HCT116 (cell line): ENCODE measurements at regions of chr17 and their contacts with region 1.

Region 1: GRCh38 chr17:63919311-63919723 is 678 bp upstream of the GH1 start:
- DNase-seq: peak; percentile 59
- ATAC-seq: peak; percentile 98
- H3K4me3 ChIP-seq: no peak overlapping the region
- H3K27ac ChIP-seq: no peak overlapping the region
- H3K4me1 ChIP-seq: no peaks in the 10 kb centered on the region
- H3K27me3 ChIP-seq: no peaks in the 10 kb centered on the region
- CTCF ChIP-seq: peak; percentile 96 to 98 (median 98)
- POLR2A ChIP-seq: no peak
- RAD21 ChIP-seq: peak; percentile 97

Region 2: GRCh38 chr17:63984651-63985386 is 65.5 kb after region 1 on chr17:
- CTCF ChIA-PET with region 1: interaction called, 77 read pairs
- POLR2A ChIA-PET with region 1: no interaction called
- RAD21 ChIA-PET with region 1: no interaction called
- intact Hi-C with region 1: loop called (anchors 1 kb)
- DNase-seq: peak; percentile 64
- ATAC-seq: peak; percentile 65
- H3K4me3 ChIP-seq: no peak overlapping the region
- H3K27ac ChIP-seq: no peak overlapping the region
- H3K4me1 ChIP-seq: peaks cover 5 to 16% of the 10 kb centered on the region in 2 experiments
- H3K27me3 ChIP-seq: no peaks in the 10 kb centered on the region
- CTCF ChIP-seq: no peak
- POLR2A ChIP-seq: no peak
- RAD21 ChIP-seq: no peak

Region 3: DNA sequence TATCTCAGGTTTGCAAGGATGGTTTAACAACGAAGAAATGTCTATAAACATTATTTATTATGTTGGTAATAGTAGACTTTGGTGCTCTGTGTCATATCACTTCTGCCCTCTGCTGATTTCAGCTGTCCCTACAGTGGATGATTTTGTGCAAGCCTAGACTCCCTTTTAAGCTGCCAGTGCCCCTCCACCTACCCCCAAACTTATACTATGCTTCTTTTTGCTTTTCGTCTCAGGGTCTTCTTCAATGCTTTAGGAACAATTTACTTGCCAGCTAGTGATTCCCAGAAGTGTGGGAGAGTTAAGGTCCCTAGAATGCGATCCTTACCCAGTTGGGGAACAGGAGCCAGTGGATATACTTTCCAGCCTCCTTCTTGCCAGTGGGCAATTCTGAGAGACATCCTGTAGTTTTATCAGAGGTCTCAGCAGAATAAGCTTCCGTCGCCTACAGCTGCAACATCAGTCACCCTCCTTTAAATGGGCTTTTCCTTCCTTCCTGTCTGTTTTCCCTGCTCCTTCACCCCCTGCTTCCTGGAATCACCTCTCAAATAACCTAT is 97.0 kb after region 1 on chr17:
- CTCF ChIA-PET with region 1: interaction called, 23 read pairs
- POLR2A ChIA-PET with region 1: no interaction called
- RAD21 ChIA-PET with region 1: interaction called, 3 to 5 read pairs
- intact Hi-C with region 1: loop called (anchors 2 kb)
- DNase-seq: no peak
- ATAC-seq: peak; percentile 80
- H3K4me3 ChIP-seq: no peak overlapping the region
- H3K27ac ChIP-seq: no peak overlapping the region
- H3K4me1 ChIP-seq: no peaks in the 10 kb centered on the region
- H3K27me3 ChIP-seq: no peaks in the 10 kb centered on the region
- CTCF ChIP-seq: peak; percentile 16 to 39 (median 34); a peak in 4 of 6 replicates
- POLR2A ChIP-seq: no peak
- RAD21 ChIP-seq: peak; percentile 56